ENCODE measurements at regions of chr22 and their contacts with region 1.

Region 1: DNA sequence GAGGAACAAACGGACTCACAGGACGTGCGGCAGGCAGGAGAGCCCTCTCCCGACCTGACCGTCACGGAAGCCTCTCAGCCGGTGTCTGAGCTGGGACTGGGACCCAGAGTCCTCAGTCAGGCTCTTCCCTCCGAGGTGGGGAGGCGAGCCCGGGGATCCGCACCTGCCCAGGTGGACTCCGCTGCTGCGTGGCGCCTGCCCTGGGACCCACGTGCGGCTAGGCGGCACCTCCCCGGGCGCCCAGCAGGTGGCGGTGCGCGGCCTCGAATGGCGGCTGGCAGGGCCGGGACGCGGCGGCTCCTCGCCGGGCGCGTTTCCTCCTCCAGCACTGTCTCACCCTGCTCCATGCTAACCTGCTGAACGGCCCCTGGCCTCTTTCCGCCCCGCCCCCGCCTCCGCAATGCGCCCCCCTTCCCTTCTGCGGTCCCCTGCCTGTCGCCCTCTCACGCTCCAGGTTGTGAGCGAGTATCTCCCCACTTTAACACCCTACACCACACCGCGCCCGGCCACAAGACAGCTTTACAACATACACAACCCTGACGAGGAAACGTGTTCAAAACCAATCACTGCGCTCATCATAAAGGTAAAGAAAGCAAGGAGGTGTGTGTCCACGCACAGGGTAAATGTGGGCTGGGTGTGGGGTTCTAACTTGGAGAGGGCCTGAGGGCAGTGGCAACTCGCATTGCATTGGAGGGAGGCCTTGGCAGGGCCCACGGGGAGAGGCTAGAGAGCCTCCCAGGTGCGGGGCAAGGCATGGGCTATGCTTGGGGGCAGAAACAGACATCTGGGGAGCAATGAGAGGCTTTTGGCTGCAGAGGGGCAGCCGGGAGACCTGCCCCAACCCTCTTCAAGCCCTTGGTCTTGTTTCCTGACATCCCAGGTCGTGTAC is 25.9 kb upstream of the ATXN10 start:
- DNase-seq: peak; percentile 78 to 82 (median 81)
- ATAC-seq: peak; percentile 95 to 99 (median 98)
- H3K4me3 ChIP-seq: peak overlapping the region in 1 of 3 donors; percentile 11
- H3K27ac ChIP-seq: no peak overlapping the region
- H3K4me1 ChIP-seq: peaks cover 0 to 3% (median 0%) of the 10 kb centered on the region in 4 donors
- H3K27me3 ChIP-seq: no peaks in the 10 kb centered on the region
- CTCF ChIP-seq: peak; percentile 94 to 99 (median 96)
- POLR2A ChIP-seq: no peak

Region 2: DNA sequence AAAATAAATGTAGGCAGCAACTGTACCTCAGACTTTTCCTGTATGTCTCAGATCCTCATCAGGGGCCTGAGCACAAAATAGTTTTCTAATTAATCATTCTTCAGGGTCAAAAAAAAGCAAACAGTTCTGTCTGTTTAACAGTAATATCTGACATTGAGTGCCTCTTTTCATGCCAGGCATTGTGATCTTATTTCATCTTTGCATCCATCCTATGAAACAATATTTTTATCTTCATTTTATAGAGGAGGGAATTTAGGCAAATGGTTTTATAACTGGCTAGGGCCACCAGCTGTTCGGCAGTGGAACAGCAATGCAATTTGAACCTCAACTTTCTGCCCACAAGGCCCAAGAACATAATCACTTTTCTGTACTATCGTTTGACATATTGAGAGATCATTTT is 185.6 kb after region 1 on chr22:
- intact Hi-C with region 1: loop called in 1 of 2 experiments (anchors 10 kb)
- DNase-seq: no peak
- ATAC-seq: peak; percentile 30 to 40 (median 34)
- H3K4me3 ChIP-seq: no peak overlapping the region
- H3K27ac ChIP-seq: no peak overlapping the region
- H3K4me1 ChIP-seq: no peaks in the 10 kb centered on the region
- H3K27me3 ChIP-seq: no peaks in the 10 kb centered on the region
- CTCF ChIP-seq: peak; percentile 37 to 58 (median 44)
- POLR2A ChIP-seq: no peak

Region 3: GRCh38 chr22:45863981-45864751 is 218.4 kb after region 1 on chr22:
- intact Hi-C with region 1: loop called in 1 of 2 experiments (anchors 10 kb)
- DNase-seq: peak in 2 of 3 donors; percentile 65 to 66
- ATAC-seq: peak; percentile 51 to 75 (median 72)
- H3K4me3 ChIP-seq: no peak overlapping the region
- H3K27ac ChIP-seq: no peak overlapping the region
- H3K4me1 ChIP-seq: peaks cover 0 to 14% (median 0%) of the 10 kb centered on the region in 4 donors
- H3K27me3 ChIP-seq: no peaks in the 10 kb centered on the region
- CTCF ChIP-seq: peak; percentile 70 to 87 (median 81)
- POLR2A ChIP-seq: no peak

Region 4: GRCh38 chr22:46280999-46281623 is 635.3 kb after region 1 on chr22:
- intact Hi-C with region 1: no loop called
- DNase-seq: peak in 1 of 3 donors; percentile 41
- ATAC-seq: peak; percentile 34 to 78 (median 56)
- H3K4me3 ChIP-seq: no peak overlapping the region
- H3K27ac ChIP-seq: peak overlapping the region in 1 of 3 donors; percentile 62
- H3K4me1 ChIP-seq: no peaks in the 10 kb centered on the region
- H3K27me3 ChIP-seq: no peaks in the 10 kb centered on the region
- CTCF ChIP-seq: no peak
- POLR2A ChIP-seq: no peak

Measured in right lobe of liver (tissue), 6 donors.